Activated CD4-positive, alpha-beta memory T cell treated with anti-CD3 and anti-CD28 coated beads for 36 hours (primary cell): ENCODE measurements at regions of chr16 and their contacts with region 1.

Region 1: GRCh38 chr16:10509534-10510025 is 70.8 kb downstream of the EMP2 start:
- DNase-seq: peak; percentile 66
- H3K4me3 Mint-ChIP-seq: no peak overlapping the region
- H3K27ac Mint-ChIP-seq: peak overlapping the region; percentile 24
- H3K4me1 Mint-ChIP-seq: peaks cover 22% of the 10 kb centered on the region
- H3K27me3 Mint-ChIP-seq: no peaks in the 10 kb centered on the region

Region 2: GRCh38 chr16:10256784-10257641 is 252.6 kb before region 1 on chr16:
- CTCF ChIA-PET with region 1: interaction called, 121 read pairs
- POLR2A ChIA-PET with region 1: no interaction called
- intact Hi-C with region 1: loop called (anchors 1 kb)
- DNase-seq: peak; percentile 54
- H3K4me3 Mint-ChIP-seq: no peak overlapping the region
- H3K27ac Mint-ChIP-seq: no peak overlapping the region
- H3K4me1 Mint-ChIP-seq: peaks cover 5% of the 10 kb centered on the region
- H3K27me3 Mint-ChIP-seq: peaks cover 3% of the 10 kb centered on the region

Region 3: DNA sequence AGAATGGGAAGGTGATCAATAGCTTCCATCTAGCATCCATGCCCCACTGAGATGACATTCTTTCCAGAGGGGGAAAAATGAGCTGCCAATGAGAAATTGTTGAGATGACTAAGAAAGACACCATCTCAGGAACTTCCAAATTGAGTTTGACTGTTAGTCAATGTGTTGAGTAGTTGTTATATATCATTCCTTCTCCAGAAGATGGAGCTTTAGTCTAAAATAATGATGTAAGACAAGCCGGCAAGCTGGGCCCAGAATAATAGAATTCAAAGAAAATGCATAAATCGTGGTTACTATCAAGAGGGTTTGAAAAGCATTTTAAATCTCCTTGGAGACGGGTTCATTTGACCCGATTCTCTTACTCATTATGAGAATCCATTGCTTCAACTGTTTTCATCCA is 194.8 kb before region 1 on chr16:
- CTCF ChIA-PET with region 1: interaction called, 68 read pairs
- POLR2A ChIA-PET with region 1: interaction called, 4 read pairs
- intact Hi-C with region 1: loop called (anchors 1 kb)
- DNase-seq: no peak
- H3K4me3 Mint-ChIP-seq: no peak overlapping the region
- H3K27ac Mint-ChIP-seq: no peak overlapping the region
- H3K4me1 Mint-ChIP-seq: peaks cover 10% of the 10 kb centered on the region
- H3K27me3 Mint-ChIP-seq: no peaks in the 10 kb centered on the region

Region 4: DNA sequence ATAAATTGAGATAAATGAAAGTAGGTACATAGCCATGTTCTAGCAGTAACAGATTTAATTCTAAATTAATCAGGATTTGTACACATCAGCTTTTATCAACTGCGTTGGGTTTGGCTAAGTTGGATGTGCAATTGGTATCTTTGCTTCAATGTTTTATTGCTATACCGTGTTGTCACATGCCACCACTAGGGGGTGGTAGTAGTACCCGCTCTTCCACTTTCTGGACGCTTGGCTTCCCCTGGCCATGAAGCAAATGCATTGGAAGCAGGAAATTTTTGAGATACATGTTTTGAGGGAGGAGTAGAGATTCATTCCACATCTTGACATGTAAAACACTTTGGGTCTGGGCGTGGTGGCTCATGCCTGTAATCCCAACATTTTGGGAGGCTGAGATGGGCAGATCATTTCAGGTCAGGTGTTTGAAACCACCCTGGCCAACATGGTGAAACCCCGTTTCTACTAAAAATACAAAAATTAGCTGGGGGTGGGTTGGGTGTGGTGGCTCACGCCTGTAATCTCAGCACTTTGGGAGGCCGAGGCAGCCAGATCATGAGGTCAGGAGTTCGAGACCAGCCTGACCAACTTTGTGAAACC is 12.2 kb after region 1 on chr16:
- CTCF ChIA-PET with region 1: interaction called, 12 read pairs
- POLR2A ChIA-PET with region 1: no interaction called
- intact Hi-C with region 1: no loop called
- DNase-seq: peak; percentile 55
- H3K4me3 Mint-ChIP-seq: no peak overlapping the region
- H3K27ac Mint-ChIP-seq: no peak overlapping the region
- H3K4me1 Mint-ChIP-seq: no peaks in the 10 kb centered on the region
- H3K27me3 Mint-ChIP-seq: no peaks in the 10 kb centered on the region

Region 5: GRCh38 chr16:10871149-10871991 is 361.8 kb after region 1 on chr16:
- CTCF ChIA-PET with region 1: no interaction called
- POLR2A ChIA-PET with region 1: no interaction called
- intact Hi-C with region 1: loop called (anchors 5 kb)
- DNase-seq: peak; percentile 90
- H3K4me3 Mint-ChIP-seq: peak overlapping the region; percentile 36
- H3K27ac Mint-ChIP-seq: peak overlapping the region; percentile 85
- H3K4me1 Mint-ChIP-seq: peaks cover 59% of the 10 kb centered on the region
- H3K27me3 Mint-ChIP-seq: peaks cover 38% of the 10 kb centered on the region